Left ventricle myocardium inferior (tissue), 1 donor: ENCODE measurements at regions of chr12 and their contacts with region 1.

Region 1: GRCh38 chr12:63276537-63277365 is 125.8 kb upstream of the AVPR1A start:
- DNase-seq: no peak
- H3K4me3 ChIP-seq: no peak overlapping the region
- H3K27ac ChIP-seq: no peak overlapping the region
- H3K4me1 ChIP-seq: no peaks in the 10 kb centered on the region
- H3K27me3 ChIP-seq: no peaks in the 10 kb centered on the region
- CTCF ChIP-seq: peak; percentile 69

Region 2: GRCh38 chr12:62543753-62544152 is 733.0 kb before region 1 on chr12:
- intact Hi-C with region 1: no loop called
- DNase-seq: no peak
- H3K4me3 ChIP-seq: no peak overlapping the region
- H3K27ac ChIP-seq: no peak overlapping the region
- H3K4me1 ChIP-seq: no peaks in the 10 kb centered on the region
- H3K27me3 ChIP-seq: no peaks in the 10 kb centered on the region
- CTCF ChIP-seq: no peak

Region 3: GRCh38 chr12:63103494-63104131 is 173.1 kb before region 1 on chr12:
- intact Hi-C with region 1: loop called (anchors 10 kb)
- DNase-seq: no peak
- H3K4me3 ChIP-seq: no peak overlapping the region
- H3K27ac ChIP-seq: no peak overlapping the region
- H3K4me1 ChIP-seq: no peaks in the 10 kb centered on the region
- H3K27me3 ChIP-seq: no peaks in the 10 kb centered on the region
- CTCF ChIP-seq: peak; percentile 87